GM10248 (cell line): ENCODE measurements at regions of chr13 and their contacts with region 1.

Region 1: GRCh38 chr13:45310341-45311125 is 30.4 kb downstream of the TPT1 start:
- DNase-seq: no peak
- CTCF ChIP-seq: no peak

Region 2: DNA sequence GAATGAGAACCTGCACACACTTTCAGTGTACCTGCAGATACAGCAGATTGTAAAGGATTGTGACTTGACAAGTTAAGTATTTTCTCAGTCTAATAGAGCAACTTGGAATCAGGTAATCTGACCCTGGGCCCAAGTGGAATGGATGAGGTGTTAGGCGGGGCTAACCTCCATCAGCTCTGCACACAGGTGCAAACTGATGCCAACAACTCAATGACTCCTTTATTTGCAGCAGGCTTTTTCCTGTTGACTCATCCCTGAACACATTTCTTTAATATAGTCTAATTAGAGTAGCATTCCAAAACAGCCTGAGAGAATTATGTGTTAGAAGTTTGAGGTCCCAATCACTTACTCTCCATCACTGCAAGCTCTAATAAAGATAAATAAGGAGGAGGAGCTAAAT is 18.4 kb before region 1 on chr13:
- CTCF ChIA-PET with region 1: interaction called, 17 read pairs
- POLR2A ChIA-PET with region 1: no interaction called
- DNase-seq: no peak
- CTCF ChIP-seq: no peak

Region 3: DNA sequence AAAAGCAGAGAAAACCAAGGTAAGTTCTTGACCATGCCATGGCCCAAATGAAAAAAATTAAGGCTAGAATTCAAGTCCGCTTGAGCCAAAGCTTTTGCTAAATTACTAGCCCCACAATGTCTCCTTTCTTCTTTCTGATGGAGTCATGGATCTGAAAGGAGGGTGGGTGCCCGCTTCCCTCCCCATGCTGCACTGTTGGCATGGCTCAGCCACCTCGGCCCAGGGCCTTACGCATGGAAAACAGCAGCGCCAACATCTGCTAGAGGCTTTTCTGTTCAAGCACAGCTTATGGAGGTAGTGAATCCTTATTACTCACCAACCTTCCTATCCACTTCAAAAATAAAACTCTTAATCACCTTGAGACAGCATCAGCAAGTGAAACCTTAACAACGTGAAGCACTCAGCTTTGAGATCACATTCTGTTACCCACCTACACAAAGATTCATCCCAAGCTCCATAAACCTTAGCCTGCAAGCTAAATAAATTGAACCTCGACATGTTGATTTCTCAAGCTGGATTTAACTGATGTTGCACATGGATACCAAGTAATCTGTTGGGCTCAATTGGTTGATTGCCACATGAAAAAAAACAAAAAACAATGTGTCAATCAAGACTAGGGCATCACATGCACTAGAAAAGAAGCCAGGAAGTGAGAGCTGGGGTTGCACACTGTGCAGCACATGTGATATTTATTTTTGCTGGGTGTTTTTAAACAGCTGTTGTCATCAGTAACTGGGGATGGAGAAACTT is 12.9 kb before region 1 on chr13:
- CTCF ChIA-PET with region 1: interaction called, 17 read pairs
- POLR2A ChIA-PET with region 1: no interaction called
- DNase-seq: no peak
- CTCF ChIP-seq: no peak

Region 4: DNA sequence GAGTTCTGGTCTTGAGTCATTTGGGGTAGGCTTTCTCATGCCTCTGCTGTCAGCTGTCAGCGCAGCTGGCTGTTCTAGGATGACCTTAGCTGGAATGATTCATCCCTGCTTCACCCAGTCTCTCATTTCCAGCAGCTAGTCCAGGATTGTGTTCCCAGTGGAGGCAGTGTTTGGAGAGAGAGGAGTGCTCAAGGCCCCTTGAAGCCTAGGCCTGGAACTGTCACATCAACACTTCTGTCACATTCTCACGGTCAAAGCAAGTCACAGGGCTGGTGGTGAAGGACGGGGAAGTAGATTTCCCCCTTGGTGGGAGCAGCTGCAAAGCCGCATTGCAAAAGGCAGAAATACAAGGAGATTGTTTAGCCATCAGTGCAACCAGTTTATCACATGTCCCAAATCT is 15.3 kb after region 1 on chr13:
- CTCF ChIA-PET with region 1: interaction called, 21 read pairs
- POLR2A ChIA-PET with region 1: interaction called, 3 read pairs
- DNase-seq: no peak
- CTCF ChIP-seq: no peak